A673 (cell line): ENCODE measurements at regions of chr2 and their contacts with region 1.

Region 1: DNA sequence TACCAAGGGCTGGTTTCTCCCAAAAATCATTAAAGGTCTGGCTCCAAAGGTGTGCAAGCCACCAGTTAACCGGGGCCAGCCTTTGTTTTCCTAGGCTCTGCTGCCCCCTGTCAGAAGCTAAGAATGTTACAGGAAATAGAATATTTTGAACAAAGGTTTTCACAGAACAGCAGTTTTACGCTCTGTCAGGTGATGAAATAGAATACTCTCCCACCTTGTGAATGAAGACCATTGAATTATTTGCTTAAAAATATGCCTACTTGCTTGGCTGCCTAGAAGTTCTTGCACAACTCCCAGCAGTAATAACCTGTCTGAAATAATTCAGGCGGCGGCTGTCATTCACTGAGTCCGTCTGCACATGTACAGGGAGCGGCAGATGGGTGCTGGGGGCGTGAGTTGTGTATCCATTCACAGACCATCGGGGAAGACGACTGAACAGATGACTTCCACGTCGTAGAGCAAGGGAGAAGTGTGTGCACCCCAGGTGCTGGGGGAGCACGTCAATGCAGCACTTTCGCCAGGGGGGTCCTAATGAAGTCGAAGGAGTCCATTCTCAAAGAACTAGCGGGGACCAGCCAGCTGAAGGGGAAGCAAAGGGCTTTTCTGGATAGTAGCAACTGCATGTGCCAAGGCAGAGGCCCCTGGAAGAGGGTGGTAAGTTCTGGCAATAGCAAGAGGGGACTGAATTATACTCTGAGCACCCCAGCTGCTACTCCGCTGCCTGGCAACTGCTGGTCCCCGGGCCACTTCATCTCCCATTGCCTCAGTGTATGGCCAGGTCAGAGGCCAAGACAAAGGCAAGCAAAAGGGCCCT is 56.1 kb downstream of the SF3B1 start:
- DNase-seq: peak; percentile 69
- H3K4me3 ChIP-seq: peak overlapping the region; percentile 26
- H3K27ac ChIP-seq: no peak overlapping the region
- H3K4me1 ChIP-seq: peaks cover 4% of the 10 kb centered on the region
- H3K27me3 ChIP-seq: no peaks in the 10 kb centered on the region
- CTCF ChIP-seq: peak; percentile 86

Region 2: DNA sequence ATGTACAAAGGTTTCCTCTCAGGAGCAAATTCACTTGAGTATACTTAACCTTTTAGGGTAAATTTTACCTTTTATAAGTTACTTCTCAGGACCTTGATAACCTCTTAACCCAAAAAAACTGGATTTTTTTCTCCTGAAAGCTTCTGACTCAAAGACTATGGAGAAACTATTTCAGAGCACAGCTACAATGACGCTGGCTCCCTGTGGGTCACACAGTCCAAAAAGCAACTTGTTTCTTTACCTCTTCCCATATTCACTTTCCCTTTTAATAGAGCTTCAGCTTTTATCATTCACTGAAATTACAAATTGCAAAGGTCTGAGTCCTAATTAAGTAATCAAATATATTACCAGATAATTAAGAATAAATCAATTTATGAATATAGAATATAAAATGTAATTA is 611.6 kb before region 1 on chr2:
- CTCF ChIA-PET with region 1: no interaction called
- POLR2A ChIA-PET with region 1: no interaction called
- intact Hi-C with region 1: loop called (anchors 5 kb)
- DNase-seq: no peak
- H3K4me3 ChIP-seq: no peak overlapping the region
- H3K27ac ChIP-seq: no peak overlapping the region
- H3K4me1 ChIP-seq: no peaks in the 10 kb centered on the region
- H3K27me3 ChIP-seq: no peaks in the 10 kb centered on the region
- CTCF ChIP-seq: no peak

Region 3: DNA sequence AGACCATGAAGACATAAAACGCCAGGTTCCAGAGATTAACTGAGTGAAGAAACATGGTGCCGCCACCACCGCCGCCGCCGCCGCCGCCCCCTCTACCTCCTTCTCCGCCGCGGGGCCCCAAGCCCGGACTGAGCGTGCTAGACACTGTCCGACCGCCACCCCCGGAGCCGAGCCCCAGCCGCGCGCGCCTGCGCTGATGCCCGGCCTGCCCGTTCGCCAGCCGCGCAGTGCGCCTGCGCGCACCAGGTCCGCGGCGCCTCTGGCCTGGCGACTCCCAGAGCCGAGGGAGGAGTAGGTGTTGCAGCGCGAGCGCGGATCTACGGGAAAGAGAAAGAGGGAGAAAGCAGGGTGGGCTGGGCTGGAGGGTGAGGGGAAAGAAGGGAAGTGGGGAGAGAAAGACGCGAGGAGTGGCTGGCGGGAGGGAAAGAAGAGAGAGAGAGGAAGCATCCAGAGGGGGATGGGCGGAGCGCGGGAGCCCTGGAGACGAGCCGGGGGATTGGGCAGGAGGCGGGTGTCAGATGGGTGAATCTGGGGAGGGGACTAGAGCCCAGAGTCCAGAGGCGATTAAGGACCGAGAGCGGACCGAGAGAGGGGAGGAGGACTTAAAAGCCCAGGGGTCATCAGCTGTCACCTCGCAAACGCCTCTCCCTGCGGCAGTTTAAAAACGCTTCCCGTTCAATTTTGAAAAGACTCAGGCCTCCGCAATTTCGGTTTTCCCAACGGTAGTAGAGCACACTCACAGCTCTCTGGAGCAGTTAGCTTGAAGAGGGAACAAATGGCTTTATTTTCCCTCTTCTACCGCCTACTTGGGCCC is 451.9 kb before region 1 on chr2 and contains the start of gene PGAP1:
- CTCF ChIA-PET with region 1: no interaction called
- POLR2A ChIA-PET with region 1: no interaction called
- intact Hi-C with region 1: loop called (anchors 10 kb)
- DNase-seq: peak; percentile 95
- H3K4me3 ChIP-seq: peak within 1 kb of the TSS; percentile 72
- H3K27ac ChIP-seq: peak within 1 kb of the TSS; percentile 76
- H3K4me1 ChIP-seq: peaks cover 10% of the 10 kb centered on the region
- H3K27me3 ChIP-seq: no peaks in the 10 kb centered on the region
- CTCF ChIP-seq: no peak
- total RNA-seq, gene PGAP1: 40.4 and 46.8 TPM in 2 replicates

Region 4: GRCh38 chr2:197113275-197113711 is 265.4 kb before region 1 on chr2:
- CTCF ChIA-PET with region 1: no interaction called
- POLR2A ChIA-PET with region 1: no interaction called
- intact Hi-C with region 1: loop called (anchors 1 kb)
- DNase-seq: peak; percentile 60
- H3K4me3 ChIP-seq: no peak overlapping the region
- H3K27ac ChIP-seq: peak overlapping the region; percentile 18
- H3K4me1 ChIP-seq: peaks cover 7% of the 10 kb centered on the region
- H3K27me3 ChIP-seq: no peaks in the 10 kb centered on the region
- CTCF ChIP-seq: peak; percentile 77

Region 5: GRCh38 chr2:197777823-197778407 is 399.2 kb after region 1 on chr2:
- CTCF ChIA-PET with region 1: no interaction called
- POLR2A ChIA-PET with region 1: no interaction called
- intact Hi-C with region 1: loop called (anchors 5 kb)
- DNase-seq: peak; percentile 62
- H3K4me3 ChIP-seq: no peak overlapping the region
- H3K27ac ChIP-seq: no peak overlapping the region
- H3K4me1 ChIP-seq: peaks cover 6% of the 10 kb centered on the region
- H3K27me3 ChIP-seq: no peaks in the 10 kb centered on the region
- CTCF ChIP-seq: peak; percentile 77